ENCODE measurements at regions of chr9 and their contacts with region 1.

Region 1: DNA sequence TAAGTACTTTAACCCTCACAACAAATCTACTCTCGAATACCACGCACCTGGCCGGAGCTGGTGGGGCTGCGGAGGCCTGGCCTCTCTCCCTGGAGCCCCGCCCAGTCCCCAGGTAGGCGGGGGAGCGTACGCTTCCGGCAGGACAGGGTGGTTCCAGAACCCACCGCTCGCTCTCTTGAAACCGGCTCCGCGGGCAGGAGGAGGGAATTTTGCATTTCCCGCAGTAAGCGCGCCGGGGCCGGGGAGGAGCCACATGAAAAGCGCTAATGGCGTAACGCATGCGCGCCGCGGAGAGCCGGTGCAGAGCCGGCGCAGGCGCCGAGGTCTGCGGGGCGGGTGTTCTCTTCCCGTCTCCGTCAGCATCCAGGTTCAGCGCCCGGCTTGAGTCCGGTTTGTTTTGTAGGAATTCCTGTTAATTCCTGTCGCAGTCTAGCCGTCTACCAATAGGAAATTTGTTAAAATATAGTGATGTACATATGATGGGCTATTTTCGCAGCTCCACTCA is 20.8 kb downstream of the CAVIN4 start:
- DNase-seq: peak; percentile 75 to 98 (median 86)

Region 2: DNA sequence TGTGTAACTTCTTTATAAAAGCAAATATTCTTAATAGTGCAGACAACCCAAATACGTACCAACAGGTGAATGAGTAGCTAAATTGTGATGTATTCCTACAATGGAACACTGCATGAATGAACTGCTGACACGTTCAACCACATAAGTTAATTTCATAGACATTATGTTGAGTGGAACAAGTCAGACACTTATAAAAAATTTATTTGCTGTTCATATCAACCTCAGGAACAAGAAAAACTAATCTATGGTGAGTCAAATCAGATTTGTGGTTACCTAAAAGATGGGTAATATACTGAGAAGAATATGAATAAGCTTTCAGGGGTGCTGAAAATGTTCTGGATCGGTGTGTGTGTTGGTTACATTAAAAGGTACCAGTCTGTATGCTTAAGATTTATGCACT is 464.0 kb before region 1 on chr9:
- intact Hi-C with region 1: no loop called
- DNase-seq: no peak

Region 3: GRCh38 chr9:100196215-100196614 is 402.5 kb before region 1 on chr9:
- intact Hi-C with region 1: no loop called
- DNase-seq: no peak

Region 4: GRCh38 chr9:100426530-100427428 is 171.9 kb before region 1 on chr9 and contains the start of gene MSANTD3:
- intact Hi-C with region 1: loop called (anchors 1 kb)
- DNase-seq: peak; percentile 23 to 94 (median 46)

Region 5: GRCh38 chr9:100445161-100445902 is 153.4 kb before region 1 on chr9:
- intact Hi-C with region 1: loop called (anchors 1 kb)
- DNase-seq: no peak

Region 6: DNA sequence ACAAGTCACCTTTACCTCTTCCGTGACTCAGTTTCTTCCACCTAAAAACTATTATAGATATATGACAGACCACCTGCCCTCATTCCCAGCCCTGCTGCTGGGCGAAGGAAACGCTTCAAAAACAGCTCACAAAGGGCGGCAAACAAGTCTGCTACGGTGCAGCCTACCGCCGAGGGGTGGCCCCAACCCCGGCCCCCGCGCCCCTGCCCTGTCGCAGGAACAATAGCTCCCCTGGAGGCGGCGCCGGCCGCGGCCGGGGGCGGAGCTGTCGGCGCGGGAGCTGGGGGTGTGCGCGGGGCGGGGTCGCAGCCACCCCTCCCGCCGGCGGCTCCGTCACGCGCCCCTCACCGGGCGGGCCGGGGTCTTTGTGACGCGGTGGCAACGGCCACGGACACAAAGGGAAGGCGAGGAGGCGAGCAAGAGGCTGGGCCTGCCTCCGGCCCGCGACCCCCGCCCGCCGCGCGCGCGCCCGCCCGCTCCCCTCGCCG is 125.9 kb before region 1 on chr9 and contains the start of gene TMEFF1:
- intact Hi-C with region 1: loop called (anchors 10 kb)
- DNase-seq: peak; percentile 42 to 95 (median 72)

Region 7: DNA sequence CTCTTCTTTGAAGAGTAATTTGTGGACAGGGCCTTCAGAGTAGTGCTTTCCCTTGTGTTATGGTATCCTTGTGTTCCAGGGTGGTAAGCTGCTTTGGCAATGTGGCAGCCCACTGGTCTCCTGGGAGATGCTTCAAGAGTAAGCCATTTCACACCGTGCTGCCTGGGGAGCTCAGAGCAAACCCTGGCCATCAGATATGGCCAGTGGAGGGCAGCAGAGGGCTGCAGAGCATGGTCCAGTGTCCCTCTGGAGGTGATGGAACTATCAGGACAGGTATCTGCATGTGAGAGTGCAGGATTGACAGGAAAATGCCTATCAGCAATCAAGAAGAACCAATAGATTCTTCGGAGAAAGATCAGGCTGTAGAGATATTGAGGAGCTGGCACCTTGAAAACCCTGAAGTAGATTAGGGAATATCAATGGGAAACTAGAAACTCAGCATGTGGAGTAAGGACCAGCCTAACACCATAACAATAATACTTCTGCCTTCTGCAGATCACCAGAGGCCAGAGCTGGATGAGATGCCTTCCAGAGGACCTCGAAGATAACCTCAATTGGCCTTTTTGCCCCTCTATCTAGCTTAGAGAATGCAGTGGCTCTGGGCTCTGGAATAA is 520.6 kb after region 1 on chr9:
- intact Hi-C with region 1: loop called (anchors 5 kb)
- DNase-seq: peak; percentile 36 to 96 (median 74)

Region 8: GRCh38 chr9:101311758-101312420 is 713.2 kb after region 1 on chr9:
- intact Hi-C with region 1: loop called (anchors 2 kb)
- DNase-seq: no peak

Region 9: GRCh38 chr9:101387871-101388506 is 789.3 kb after region 1 on chr9:
- intact Hi-C with region 1: loop called (anchors 5 kb)
- DNase-seq: no peak

Measured in posterior cingulate gyrus (tissue), 11 donors.